ENCODE measurements at regions of chr19 and their contacts with region 1.

Region 1: GRCh38 chr19:11005521-11005920 is 44.7 kb downstream of the SMARCA4 start:
- DNase-seq: no peak
- H3K4me3 Mint-ChIP-seq: no peak overlapping the region
- H3K27ac Mint-ChIP-seq: no peak overlapping the region
- H3K4me1 Mint-ChIP-seq: no peaks in the 10 kb centered on the region
- H3K27me3 Mint-ChIP-seq: no peaks in the 10 kb centered on the region

Region 2: DNA sequence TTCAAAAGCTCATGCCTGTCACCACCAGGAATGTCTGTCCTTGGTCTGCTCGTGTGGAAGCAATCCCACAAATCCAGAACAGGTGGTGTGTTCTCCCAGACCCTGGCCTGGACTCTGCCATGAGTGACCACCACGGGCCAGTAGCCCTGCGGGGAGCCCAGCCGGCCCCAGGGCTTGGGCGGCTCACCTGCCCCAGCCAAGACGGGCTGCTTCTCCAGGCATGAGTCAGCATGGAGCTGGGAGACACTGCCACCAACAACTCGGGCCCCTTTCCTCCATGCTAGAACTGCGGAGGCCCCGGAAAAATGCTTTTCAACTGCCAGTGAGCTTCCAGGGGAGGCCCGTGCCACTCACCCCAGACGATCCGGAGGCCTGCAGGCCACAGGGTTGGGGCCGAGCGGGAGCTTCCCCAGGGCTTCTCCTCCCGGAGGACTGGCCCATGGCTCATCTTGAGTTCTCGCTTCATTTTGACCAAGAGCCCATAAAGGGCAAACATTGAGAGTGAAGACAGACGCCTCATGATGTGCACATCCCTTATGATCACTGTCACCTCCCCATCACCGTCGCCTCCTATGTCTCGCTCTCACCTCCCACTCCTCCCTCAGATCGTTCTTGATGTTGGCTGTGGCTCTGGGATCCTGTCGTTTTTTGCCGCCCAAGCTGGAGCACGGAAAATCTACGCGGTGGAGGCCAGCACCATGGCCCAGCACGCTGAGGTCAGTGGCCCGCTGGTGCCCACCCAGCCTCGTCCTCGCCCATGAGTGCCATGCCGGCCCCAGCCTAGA is 93.8 kb before region 1 on chr19:
- intact Hi-C with region 1: no loop called
- DNase-seq: no peak
- H3K4me3 Mint-ChIP-seq: no peak overlapping the region
- H3K27ac Mint-ChIP-seq: no peak overlapping the region
- H3K4me1 Mint-ChIP-seq: no peaks in the 10 kb centered on the region
- H3K27me3 Mint-ChIP-seq: no peaks in the 10 kb centered on the region

Region 3: GRCh38 chr19:10979951-10980381 is 25.6 kb before region 1 on chr19:
- intact Hi-C with region 1: no loop called
- DNase-seq: peak; percentile 64
- H3K4me3 Mint-ChIP-seq: peak overlapping the region; percentile 30
- H3K27ac Mint-ChIP-seq: no peak overlapping the region
- H3K4me1 Mint-ChIP-seq: peaks cover 15% of the 10 kb centered on the region
- H3K27me3 Mint-ChIP-seq: no peaks in the 10 kb centered on the region

Region 4: DNA sequence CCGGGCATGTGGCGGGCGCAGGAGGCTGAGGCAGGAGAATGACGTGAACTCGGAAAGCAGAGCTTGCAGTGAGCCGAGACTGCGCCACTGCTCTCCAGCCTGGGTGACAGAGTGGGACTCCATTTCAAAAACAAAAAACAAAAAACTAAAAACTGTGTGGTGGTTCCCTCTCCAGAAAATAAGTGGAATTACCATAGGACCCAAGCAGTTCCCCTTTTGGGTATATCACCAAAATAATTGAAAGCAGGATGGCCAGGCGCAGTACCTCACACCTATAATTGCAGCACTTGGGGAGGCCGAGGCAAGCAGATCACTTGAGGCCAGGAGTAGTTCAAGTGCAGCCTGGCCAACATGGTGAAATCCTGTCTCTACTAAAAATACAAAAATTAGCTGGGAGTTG is 68.0 kb after region 1 on chr19:
- intact Hi-C with region 1: loop called (anchors 10 kb)
- DNase-seq: no peak
- H3K4me3 Mint-ChIP-seq: no peak overlapping the region
- H3K27ac Mint-ChIP-seq: no peak overlapping the region
- H3K4me1 Mint-ChIP-seq: peaks cover 4% of the 10 kb centered on the region
- H3K27me3 Mint-ChIP-seq: no peaks in the 10 kb centered on the region

Region 5: GRCh38 chr19:11288343-11288742 is 282.8 kb after region 1 on chr19:
- intact Hi-C with region 1: no loop called
- DNase-seq: no peak
- H3K4me3 Mint-ChIP-seq: no peak overlapping the region
- H3K27ac Mint-ChIP-seq: no peak overlapping the region
- H3K4me1 Mint-ChIP-seq: peaks cover 3% of the 10 kb centered on the region
- H3K27me3 Mint-ChIP-seq: peaks cover 34% of the 10 kb centered on the region